ENCODE measurements at regions of chr3 and their contacts with region 1.

Region 1: DNA sequence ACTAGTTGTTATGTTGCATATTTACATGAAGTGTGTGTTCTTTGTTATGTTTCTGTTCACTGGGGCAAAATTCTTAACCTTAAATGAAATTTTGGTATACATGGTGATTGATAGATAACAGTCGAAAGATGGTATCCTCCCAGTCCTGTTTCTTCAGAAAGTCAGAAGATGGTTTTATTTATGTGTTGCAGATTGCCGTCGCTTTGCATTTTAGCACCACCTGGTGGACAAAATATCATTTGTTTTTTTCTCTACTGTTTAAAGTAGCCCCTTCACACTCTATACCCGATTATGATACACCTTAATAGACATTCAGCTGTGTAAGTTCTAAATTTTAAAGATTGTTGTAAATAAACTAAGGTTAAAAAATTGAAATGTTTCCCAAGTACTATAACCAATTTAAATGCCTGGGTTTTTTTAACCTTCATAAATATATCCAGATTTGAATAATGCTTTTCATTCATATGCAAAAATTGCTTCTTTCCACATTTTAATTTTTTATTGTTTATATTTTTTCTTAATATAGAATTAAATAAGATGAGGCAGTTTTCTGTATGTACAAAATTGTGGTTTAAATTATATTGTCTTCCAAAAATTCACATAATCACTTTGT is 152.2 kb downstream of the ALCAM start:
- DNase-seq: peak; percentile 71
- H3K4me3 ChIP-seq: no peak overlapping the region
- H3K27ac ChIP-seq: no peak overlapping the region
- H3K4me1 ChIP-seq: no peaks in the 10 kb centered on the region
- CTCF ChIP-seq: peak; percentile 91

Region 2: GRCh38 chr3:104102386-104102785 is 1416.5 kb before region 1 on chr3:
- CTCF ChIA-PET with region 1: no interaction called
- POLR2A ChIA-PET with region 1: no interaction called
- intact Hi-C with region 1: loop called (anchors 10 kb)
- DNase-seq: peak; percentile 57
- H3K4me3 ChIP-seq: no peak overlapping the region
- H3K27ac ChIP-seq: no peak overlapping the region
- H3K4me1 ChIP-seq: no peaks in the 10 kb centered on the region
- CTCF ChIP-seq: peak; percentile 82

Region 3: DNA sequence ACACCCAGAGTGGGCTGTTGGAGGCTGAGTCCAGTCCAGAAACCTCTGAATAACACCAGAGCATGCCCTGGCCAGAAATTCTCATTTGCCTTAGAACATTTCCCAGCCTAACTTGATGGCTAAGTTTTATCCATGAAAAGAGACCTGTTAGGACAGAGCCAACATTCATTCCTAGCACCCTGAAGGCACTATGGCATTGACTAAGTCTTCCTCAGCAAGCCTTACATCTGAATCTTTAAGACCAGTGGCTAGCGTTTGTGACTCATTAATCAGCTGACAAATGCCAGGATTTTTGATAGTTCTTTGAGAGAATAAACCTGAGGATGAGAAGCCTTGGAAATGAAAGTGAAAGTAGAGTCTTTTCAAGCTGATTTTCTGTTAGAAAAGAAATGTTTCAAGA is 1239.3 kb before region 1 on chr3:
- CTCF ChIA-PET with region 1: no interaction called
- POLR2A ChIA-PET with region 1: no interaction called
- intact Hi-C with region 1: loop called (anchors 5 kb)
- DNase-seq: no peak
- H3K4me3 ChIP-seq: no peak overlapping the region
- H3K27ac ChIP-seq: no peak overlapping the region
- H3K4me1 ChIP-seq: no peaks in the 10 kb centered on the region
- CTCF ChIP-seq: no peak

Region 4: GRCh38 chr3:107297597-107297996 is 1778.7 kb after region 1 on chr3:
- CTCF ChIA-PET with region 1: no interaction called
- POLR2A ChIA-PET with region 1: no interaction called
- intact Hi-C with region 1: no loop called
- DNase-seq: no peak
- H3K4me3 ChIP-seq: no peak overlapping the region
- H3K27ac ChIP-seq: no peak overlapping the region
- H3K4me1 ChIP-seq: no peaks in the 10 kb centered on the region
- CTCF ChIP-seq: no peak